IMR-90 (cell line): ENCODE measurements at regions of chr1 and their contacts with region 1.

Region 1: GRCh38 chr1:243713470-243714186 is 136.4 kb downstream of the AKT3 start:
- DNase-seq: peak; percentile 44
- ATAC-seq: peak; percentile 52
- H3K4me3 ChIP-seq: no peak overlapping the region
- H3K27ac ChIP-seq: no peak overlapping the region; the same call in 1 of the 2 replicates
- H3K4me1 ChIP-seq: peaks cover 13% of the 10 kb centered on the region
- H3K27me3 ChIP-seq: no peaks in the 10 kb centered on the region
- CTCF ChIP-seq: no peak
- POLR2A ChIP-seq: no peak
- RAD21 ChIP-seq: no peak

Region 2: GRCh38 chr1:243742819-243743218 is 29.2 kb after region 1 on chr1:
- CTCF ChIA-PET with region 1: interaction called, 7 read pairs
- POLR2A ChIA-PET with region 1: no interaction called
- dilution Hi-C with region 1: no loop called
- in situ Hi-C with region 1: no loop called
- intact Hi-C with region 1: loop called (anchors 2 kb)
- DNase-seq: peak; percentile 96
- ATAC-seq: peak; percentile 89
- H3K4me3 ChIP-seq: no peak overlapping the region
- H3K27ac ChIP-seq: no peak overlapping the region
- H3K4me1 ChIP-seq: peaks cover 17% of the 10 kb centered on the region
- H3K27me3 ChIP-seq: no peaks in the 10 kb centered on the region
- CTCF ChIP-seq: no peak
- POLR2A ChIP-seq: no peak
- RAD21 ChIP-seq: peak; percentile 17; the same call in 1 of the 2 replicates

Region 3: DNA sequence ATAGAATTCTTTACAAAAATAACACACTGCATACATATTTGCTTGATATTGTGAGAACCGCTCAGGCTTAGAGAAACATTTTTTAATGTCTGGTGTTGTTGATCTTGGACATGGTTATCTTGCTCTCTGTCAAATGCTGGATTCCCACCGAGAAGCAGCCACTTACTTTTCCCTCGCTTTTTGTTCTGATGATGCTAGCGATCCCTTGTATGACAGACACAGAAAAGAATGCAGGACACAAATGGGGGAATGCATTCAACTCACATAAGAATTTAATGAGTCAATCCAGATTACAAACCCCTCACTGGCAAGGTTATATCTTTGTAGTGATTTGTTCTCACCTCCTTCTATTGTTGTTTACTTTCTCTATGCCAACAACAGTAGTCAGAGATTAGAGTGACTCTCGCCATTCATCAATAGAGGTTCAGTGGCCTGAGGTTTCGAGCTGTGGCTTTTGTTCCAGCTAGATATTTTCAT is 213.2 kb after region 1 on chr1:
- CTCF ChIA-PET with region 1: no interaction called
- POLR2A ChIA-PET with region 1: no interaction called
- dilution Hi-C with region 1: no loop called
- in situ Hi-C with region 1: no loop called
- intact Hi-C with region 1: loop called (anchors 10 kb)
- DNase-seq: peak; percentile 96
- ATAC-seq: peak; percentile 74
- H3K4me3 ChIP-seq: no peak overlapping the region
- H3K27ac ChIP-seq: no peak overlapping the region
- H3K4me1 ChIP-seq: peaks cover 14% of the 10 kb centered on the region
- H3K27me3 ChIP-seq: peaks cover 17% of the 10 kb centered on the region
- CTCF ChIP-seq: no peak
- POLR2A ChIP-seq: no peak
- RAD21 ChIP-seq: no peak

Region 4: GRCh38 chr1:244445320-244446181 is 731.9 kb after region 1 on chr1:
- CTCF ChIA-PET with region 1: no interaction called
- POLR2A ChIA-PET with region 1: no interaction called
- dilution Hi-C with region 1: no loop called
- in situ Hi-C with region 1: no loop called
- intact Hi-C with region 1: loop called (anchors 10 kb)
- DNase-seq: peak; percentile 17
- ATAC-seq: peak; percentile 49
- H3K4me3 ChIP-seq: no peak overlapping the region
- H3K27ac ChIP-seq: peak overlapping the region; percentile 77; the same call in 1 of the 2 replicates
- H3K4me1 ChIP-seq: peaks cover 18% of the 10 kb centered on the region
- H3K27me3 ChIP-seq: no peaks in the 10 kb centered on the region
- CTCF ChIP-seq: no peak
- POLR2A ChIP-seq: no peak
- RAD21 ChIP-seq: no peak